Motor neuron (in vitro differentiated cells): ENCODE measurements at regions of chr14 and their contacts with region 1.

Region 1: GRCh38 chr14:38867561-38868150 is 235.4 kb downstream of the SEC23A start:
- ATAC-seq: peak; percentile 87 to 98 (median 96)
- H3K4me3 ChIP-seq: no peak overlapping the region
- H3K27ac ChIP-seq: no peak overlapping the region
- H3K4me1 ChIP-seq: peaks cover 0 to 12% of the 10 kb centered on the region in 2 donors

Region 2: GRCh38 chr14:37903343-37904191 is 964.1 kb before region 1 on chr14:
- in situ Hi-C with region 1: loop called in 2 of 9 experiments (anchors 25 kb)
- ATAC-seq: peak in 4 of 8 experiments; percentile 19 to 79 (median 61)
- H3K4me3 ChIP-seq: no peak overlapping the region
- H3K27ac ChIP-seq: no peak overlapping the region
- H3K4me1 ChIP-seq: no peaks in the 10 kb centered on the region

Region 3: DNA sequence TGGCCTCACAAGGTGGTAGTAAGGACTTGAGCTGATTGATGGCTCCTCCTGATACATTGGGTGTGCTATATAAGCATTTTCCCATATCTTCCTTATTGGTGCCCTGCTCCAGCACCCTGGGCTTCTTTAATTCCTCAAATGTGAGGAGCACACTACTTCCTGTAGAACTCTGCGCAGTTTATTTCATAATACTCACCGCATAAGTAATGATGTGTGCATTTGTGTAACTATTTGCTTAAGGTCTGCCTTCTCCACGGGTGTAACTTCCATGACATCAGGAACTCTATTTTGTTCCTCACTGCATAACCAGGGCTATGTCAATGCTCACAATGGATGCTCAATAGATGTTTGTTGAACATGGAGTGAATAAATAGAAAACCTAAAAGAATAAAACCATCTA is 156.8 kb before region 1 on chr14:
- in situ Hi-C with region 1: no loop called
- ATAC-seq: no peak
- H3K4me3 ChIP-seq: no peak overlapping the region
- H3K27ac ChIP-seq: no peak overlapping the region
- H3K4me1 ChIP-seq: no peaks in the 10 kb centered on the region

Region 4: DNA sequence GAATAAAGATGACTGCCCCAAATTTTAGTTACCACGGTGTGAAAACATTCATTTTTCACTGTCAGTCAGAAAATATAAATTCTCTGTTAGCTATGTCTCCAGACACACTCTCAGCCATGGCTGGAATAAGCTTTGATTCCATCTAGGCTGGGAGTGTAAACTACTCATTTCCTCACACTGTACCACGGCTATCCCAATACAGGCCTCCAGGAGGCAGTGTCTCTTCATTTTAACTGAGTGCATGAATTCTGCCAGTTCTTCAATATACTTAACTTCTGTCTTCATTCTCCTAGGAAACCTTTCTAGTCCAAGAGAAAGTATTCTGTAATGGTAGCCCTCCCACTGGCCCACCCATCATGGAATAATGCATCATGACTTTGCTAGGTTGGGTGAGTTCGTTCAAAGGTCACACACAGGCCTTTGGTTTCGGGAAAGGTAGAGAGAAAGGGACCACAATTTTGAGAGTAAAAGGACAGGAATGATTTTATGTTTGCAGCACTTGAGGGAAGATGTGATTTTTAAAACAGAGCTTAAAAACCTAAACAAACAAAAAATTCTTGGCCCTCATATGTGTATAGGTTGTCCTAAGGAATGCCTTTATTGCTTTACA is 145.7 kb before region 1 on chr14:
- in situ Hi-C with region 1: loop called in 1 of 9 experiments (anchors 10 kb)
- ATAC-seq: peak in 5 of 8 experiments; percentile 29 to 94 (median 88)
- H3K4me3 ChIP-seq: no peak overlapping the region
- H3K27ac ChIP-seq: no peak overlapping the region
- H3K4me1 ChIP-seq: peaks cover 0 to 2% of the 10 kb centered on the region in 2 donors

Region 5: GRCh38 chr14:38737686-38738407 is 129.8 kb before region 1 on chr14:
- in situ Hi-C with region 1: loop called in 1 of 9 experiments (anchors 10 kb)
- ATAC-seq: peak in 5 of 8 experiments; percentile 73 to 95 (median 81)
- H3K4me3 ChIP-seq: no peak overlapping the region
- H3K27ac ChIP-seq: peak overlapping the region; percentile 47 to 52
- H3K4me1 ChIP-seq: peaks cover 15 to 18% of the 10 kb centered on the region in 2 donors